HepG2 (cell line): ENCODE measurements at regions of chr20 and their contacts with region 1.

Region 1: DNA sequence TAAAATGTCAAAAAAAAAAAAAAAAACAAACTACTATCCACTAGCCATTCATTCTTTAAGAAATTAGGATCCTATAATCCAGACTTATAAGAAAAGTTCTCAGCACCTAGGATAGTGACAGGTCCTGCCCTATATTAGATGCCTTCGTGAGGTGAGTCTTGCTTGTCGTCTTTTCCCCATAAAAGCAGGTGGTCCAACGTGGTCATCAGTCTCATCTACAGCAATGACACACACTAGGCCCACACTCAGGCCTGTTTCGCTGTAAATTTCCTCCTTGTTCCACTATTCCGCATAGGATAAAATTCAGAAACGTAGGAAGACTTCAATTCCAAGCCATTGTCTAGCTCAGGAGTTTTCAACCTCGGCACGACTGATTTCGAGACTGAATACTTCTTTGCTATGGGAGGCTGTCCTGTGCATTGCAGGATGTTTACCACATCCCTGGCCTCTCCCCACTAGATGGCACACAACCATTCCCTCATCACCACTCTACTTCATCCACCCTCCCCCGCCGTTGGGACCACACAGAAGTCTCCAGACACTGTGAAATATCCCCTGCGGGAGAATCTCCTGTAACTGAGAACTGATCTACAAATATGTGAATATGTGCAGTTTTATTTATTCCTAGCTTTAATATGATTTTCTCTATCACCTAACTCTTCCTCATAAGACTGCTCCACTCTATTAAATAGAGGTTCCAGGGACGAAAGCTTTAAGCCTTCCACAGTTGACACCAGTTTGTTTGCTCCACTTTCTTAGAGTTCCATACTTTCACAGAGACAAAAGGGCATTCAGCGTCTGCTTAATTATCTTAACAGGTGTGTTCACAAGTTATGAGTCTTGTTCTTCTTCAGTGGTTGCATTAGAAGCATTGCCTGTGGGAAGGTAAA is 346.3 kb downstream of the BMP2 start:
- DNase-seq: peak; percentile 49
- ATAC-seq: peak; percentile 100
- H3K4me3 ChIP-seq: no peak overlapping the region
- H3K27ac ChIP-seq: no peak overlapping the region
- H3K4me1 ChIP-seq: no peaks in the 10 kb centered on the region
- H3K27me3 ChIP-seq: no peaks in the 10 kb centered on the region; a peak in 1 of 5 replicates
- CTCF ChIP-seq: peak; percentile 84
- EP300 ChIP-seq: no peak
- POLR2A ChIP-seq: no peak
- RAD21 ChIP-seq: peak; percentile 78

Region 2: DNA sequence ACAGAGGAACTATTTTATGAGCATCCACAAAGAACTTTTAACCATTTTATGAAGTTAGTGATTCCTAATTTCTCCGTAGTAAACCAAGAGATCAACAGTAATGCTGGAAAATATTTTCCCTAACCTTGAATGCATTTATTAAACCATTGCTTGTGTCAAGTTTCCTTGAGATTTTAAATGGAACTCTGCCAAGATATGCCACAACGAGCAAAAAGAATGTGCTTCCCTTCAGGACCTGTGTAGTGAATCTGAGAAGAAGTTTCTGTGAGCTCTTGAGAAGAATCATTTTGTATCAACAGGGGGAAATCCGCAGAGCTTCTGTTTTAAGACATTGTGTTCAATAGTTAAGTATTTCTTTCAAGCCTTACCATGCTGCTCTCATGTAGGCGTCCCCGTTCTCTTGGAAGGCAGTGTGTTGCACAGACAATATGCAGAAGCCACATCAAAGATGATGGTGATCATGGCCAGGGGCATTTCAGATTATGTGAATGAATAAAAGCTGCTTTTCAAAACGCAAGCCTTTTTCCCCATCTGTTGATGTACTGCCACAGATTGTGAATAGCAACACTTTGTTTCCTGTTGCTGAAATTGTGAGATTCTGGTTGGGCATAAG is 93.5 kb after region 1 on chr20:
- CTCF ChIA-PET with region 1: no interaction called
- POLR2A ChIA-PET with region 1: no interaction called
- in situ Hi-C with region 1: no loop called
- intact Hi-C with region 1: no loop called
- DNase-seq: no peak
- ATAC-seq: no peak
- H3K4me3 ChIP-seq: no peak overlapping the region
- H3K27ac ChIP-seq: no peak overlapping the region
- H3K4me1 ChIP-seq: no peaks in the 10 kb centered on the region
- H3K27me3 ChIP-seq: no peaks in the 10 kb centered on the region
- CTCF ChIP-seq: no peak
- EP300 ChIP-seq: no peak
- POLR2A ChIP-seq: no peak
- RAD21 ChIP-seq: no peak

Region 3: DNA sequence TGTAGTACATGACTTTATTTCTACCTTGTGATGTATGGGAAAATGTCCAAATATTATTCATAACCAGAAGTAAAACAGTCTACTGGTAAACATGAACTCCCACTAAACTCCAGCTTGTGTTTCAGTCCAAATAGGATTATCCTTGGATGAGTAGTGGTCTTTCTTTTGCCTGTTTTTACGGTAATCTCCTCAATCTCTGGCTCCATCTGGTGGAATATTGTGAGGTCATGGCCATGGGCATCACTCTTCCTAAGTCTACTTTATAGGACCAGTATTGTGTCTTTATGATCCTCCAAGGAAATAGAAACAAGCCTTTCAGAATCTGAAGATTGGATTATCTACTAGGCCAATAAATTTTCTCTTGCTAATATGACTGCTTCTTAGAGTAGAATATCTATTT is 158.7 kb after region 1 on chr20:
- CTCF ChIA-PET with region 1: no interaction called
- POLR2A ChIA-PET with region 1: no interaction called
- in situ Hi-C with region 1: no loop called
- intact Hi-C with region 1: loop called (anchors 2 kb)
- DNase-seq: no peak
- ATAC-seq: no peak
- H3K4me3 ChIP-seq: no peak overlapping the region
- H3K27ac ChIP-seq: no peak overlapping the region
- H3K4me1 ChIP-seq: no peaks in the 10 kb centered on the region
- H3K27me3 ChIP-seq: no peaks in the 10 kb centered on the region
- CTCF ChIP-seq: peak; percentile 42
- EP300 ChIP-seq: no peak
- POLR2A ChIP-seq: no peak
- RAD21 ChIP-seq: no peak

Region 4: GRCh38 chr20:7323955-7324354 is 210.1 kb after region 1 on chr20:
- CTCF ChIA-PET with region 1: no interaction called
- POLR2A ChIA-PET with region 1: no interaction called
- in situ Hi-C with region 1: no loop called
- intact Hi-C with region 1: no loop called
- DNase-seq: no peak
- ATAC-seq: no peak
- H3K4me3 ChIP-seq: no peak overlapping the region
- H3K27ac ChIP-seq: no peak overlapping the region
- H3K4me1 ChIP-seq: no peaks in the 10 kb centered on the region
- H3K27me3 ChIP-seq: no peaks in the 10 kb centered on the region
- CTCF ChIP-seq: no peak
- EP300 ChIP-seq: no peak
- POLR2A ChIP-seq: no peak
- RAD21 ChIP-seq: no peak

Region 5: DNA sequence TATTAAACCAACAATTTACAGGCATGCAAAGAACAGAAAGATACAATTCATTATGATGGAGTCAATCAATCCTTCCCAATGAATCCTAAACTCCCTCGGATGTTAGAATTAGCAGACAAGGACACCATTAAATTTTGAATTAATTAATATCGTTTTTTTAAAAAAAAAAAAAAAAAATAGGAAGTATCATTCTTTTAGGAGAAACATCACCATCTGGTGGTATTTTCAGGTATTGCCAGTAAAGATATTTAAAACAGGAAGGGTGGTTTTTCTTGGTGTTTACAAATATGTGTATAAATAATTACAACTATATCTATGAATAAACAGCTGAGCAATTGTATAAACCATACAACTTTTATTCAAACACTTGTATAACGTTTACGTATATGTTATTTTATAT is 262.1 kb after region 1 on chr20:
- CTCF ChIA-PET with region 1: interaction called, 14 read pairs
- POLR2A ChIA-PET with region 1: no interaction called
- in situ Hi-C with region 1: loop called (anchors 10 kb)
- intact Hi-C with region 1: loop called (anchors 2 kb)
- DNase-seq: peak; percentile 29
- ATAC-seq: no peak
- H3K4me3 ChIP-seq: no peak overlapping the region
- H3K27ac ChIP-seq: no peak overlapping the region
- H3K4me1 ChIP-seq: no peaks in the 10 kb centered on the region
- H3K27me3 ChIP-seq: no peaks in the 10 kb centered on the region
- CTCF ChIP-seq: 0 out of 2 replicates have a peak, but pooled peaks have one; percentile 29
- EP300 ChIP-seq: no peak
- POLR2A ChIP-seq: no peak
- RAD21 ChIP-seq: no peak

Region 6: GRCh38 chr20:7926767-7927166 is 812.9 kb after region 1 on chr20:
- CTCF ChIA-PET with region 1: no interaction called
- POLR2A ChIA-PET with region 1: no interaction called
- in situ Hi-C with region 1: no loop called
- intact Hi-C with region 1: loop called (anchors 2 kb)
- DNase-seq: peak; percentile 23
- ATAC-seq: peak; percentile 43; the same call in 1 of the 3 replicates
- H3K4me3 ChIP-seq: no peak overlapping the region
- H3K27ac ChIP-seq: no peak overlapping the region
- H3K4me1 ChIP-seq: no peaks in the 10 kb centered on the region
- H3K27me3 ChIP-seq: no peaks in the 10 kb centered on the region
- CTCF ChIP-seq: peak; percentile 60
- EP300 ChIP-seq: no peak
- POLR2A ChIP-seq: no peak
- RAD21 ChIP-seq: no peak